ENCODE measurements at regions of chr6 and their contacts with region 1.

Region 1: DNA sequence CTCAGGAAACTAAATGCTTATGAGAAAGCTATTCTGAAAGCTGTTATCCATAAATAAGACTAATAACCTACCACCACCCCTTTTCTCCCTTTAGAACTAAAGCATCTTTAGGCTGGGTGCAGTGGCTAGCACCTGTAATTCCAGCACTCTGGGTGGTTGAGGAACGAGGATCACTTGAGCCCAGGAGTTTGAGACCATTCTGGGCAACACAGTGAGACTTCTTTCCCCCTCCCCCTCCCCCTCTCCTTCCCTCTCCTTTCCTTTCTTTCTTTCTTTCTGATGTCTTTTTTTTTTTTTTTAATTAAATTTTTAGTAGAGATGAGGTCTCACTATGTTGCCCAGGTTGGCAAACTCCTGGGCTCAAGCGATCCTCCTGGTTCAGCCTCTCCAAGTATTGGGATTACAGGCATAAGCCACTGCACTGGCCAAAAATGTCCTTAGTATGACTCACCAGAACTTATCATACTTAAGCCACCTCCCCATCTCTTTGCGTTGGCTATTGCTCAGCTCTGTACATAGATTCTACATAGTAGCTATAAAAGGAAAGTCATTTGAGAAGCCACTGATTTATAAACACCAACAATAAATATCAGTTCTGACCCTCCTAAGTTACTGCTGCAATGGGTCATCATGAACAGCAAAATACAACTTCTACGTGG is 54.8 kb upstream of the SPDEF start:
- DNase-seq: no peak
- H3K4me3 ChIP-seq: no peak overlapping the region
- H3K27ac ChIP-seq: peak overlapping the region; percentile 4 to 54
- H3K4me1 ChIP-seq: peaks cover 0 to 4% of the 10 kb centered on the region in 2 donors
- H3K27me3 ChIP-seq: no peaks in the 10 kb centered on the region
- CTCF ChIP-seq: no peak

Region 2: DNA sequence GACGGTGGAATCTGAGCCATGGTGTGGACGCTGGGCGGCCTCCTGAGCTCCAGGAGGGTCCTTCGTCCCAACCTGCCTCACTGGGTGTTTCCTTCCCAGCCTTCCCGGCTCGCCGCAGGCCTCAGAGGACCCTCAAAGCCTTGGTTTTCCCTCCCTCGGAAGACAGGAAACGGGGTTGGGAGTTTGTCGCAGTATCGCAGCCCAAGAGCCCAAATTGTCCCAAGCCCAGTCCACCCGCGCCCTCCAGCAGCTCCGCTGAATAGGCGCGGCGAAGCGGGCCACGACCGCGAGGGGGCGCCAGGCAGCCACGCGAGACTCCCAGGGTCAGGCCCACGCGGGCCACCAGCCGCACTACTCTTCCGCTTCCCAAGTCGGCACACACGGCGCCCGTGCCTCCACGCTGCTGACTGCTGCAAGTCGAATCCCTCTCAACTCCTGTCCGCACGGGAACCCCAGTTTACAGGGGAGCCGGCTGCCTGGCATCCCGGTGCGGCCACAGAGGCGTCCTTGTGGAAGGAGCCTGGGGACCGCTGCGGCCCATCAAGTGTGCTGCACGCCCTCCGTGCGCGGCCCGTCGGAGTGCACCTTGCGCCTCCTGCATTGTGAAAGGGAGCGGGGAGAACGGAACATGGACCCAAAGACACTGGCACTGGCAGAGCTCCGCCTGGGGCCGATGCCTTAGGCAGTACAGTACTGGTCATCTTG is 414.7 kb before region 1 on chr6:
- intact Hi-C with region 1: loop called (anchors 1 kb)
- DNase-seq: peak; percentile 53 to 92
- H3K4me3 ChIP-seq: peak overlapping the region; percentile 57 to 71
- H3K27ac ChIP-seq: no peak overlapping the region
- H3K4me1 ChIP-seq: peaks cover 0 to 6% of the 10 kb centered on the region in 2 donors
- H3K27me3 ChIP-seq: no peaks in the 10 kb centered on the region
- CTCF ChIP-seq: peak; percentile 98

Region 3: GRCh38 chr6:34414999-34415858 is 195.7 kb before region 1 on chr6:
- intact Hi-C with region 1: loop called (anchors 1 kb)
- DNase-seq: peak in 1 of 2 donors; percentile 87
- H3K4me3 ChIP-seq: peak overlapping the region in 1 of 2 donors; percentile 39
- H3K27ac ChIP-seq: peak overlapping the region; percentile 76 to 81
- H3K4me1 ChIP-seq: peaks cover 4 to 8% of the 10 kb centered on the region in 2 donors
- H3K27me3 ChIP-seq: no peaks in the 10 kb centered on the region
- CTCF ChIP-seq: peak; percentile 63 to 82 (median 76)

Region 4: DNA sequence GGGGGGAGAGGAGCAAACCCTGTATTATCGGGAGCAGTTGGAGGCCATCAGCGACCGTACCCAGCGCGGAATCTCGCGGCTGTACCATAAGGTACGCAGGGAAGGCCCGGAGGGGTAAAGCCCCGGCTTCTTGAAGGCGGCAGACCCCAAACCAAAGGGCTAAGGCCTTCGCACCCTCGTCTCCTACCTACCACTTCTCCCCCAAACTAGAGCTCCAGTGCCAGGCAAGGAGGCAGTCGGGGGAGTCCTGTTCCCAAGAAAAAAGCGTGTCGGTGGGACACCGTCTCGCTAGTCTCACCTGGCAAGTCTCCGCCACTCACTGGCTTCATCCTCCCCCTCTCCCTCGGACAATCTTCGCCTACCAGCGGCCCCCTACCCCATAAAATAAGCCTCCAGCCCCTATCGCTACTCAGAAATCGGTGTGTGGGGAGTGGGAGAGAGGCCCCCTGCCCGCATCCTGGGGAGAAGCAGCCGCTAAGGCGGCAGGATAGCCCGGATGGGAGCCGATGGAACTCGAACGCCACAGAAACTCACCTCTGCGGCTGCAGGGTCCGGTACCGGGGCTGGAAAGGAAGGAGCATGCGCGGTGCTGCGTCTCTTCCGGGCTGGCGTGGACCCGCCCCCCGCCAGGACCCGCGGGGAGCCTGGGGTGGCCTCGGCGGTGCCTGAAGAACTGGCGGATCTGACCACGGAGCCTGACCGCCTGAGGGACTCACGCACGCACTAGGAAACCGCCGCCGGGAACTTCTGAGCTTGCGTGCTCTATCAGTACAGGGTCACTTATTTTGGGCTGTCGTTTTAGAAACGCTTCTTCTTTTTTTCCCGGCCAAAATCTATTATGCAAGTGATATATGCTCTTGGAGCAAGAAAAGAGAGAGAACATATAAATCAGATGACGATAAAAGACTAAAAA is 185.2 kb before region 1 on chr6 and contains the start of gene RPS10:
- intact Hi-C with region 1: loop called (anchors 2 kb)
- DNase-seq: peak; percentile 41 to 94
- H3K4me3 ChIP-seq: peak within 1 kb of the TSS; percentile 70 to 88
- H3K27ac ChIP-seq: peak within 1 kb of the TSS; percentile 83 to 85
- H3K4me1 ChIP-seq: peaks cover 0 to 9% of the 10 kb centered on the region in 2 donors
- H3K27me3 ChIP-seq: no peaks in the 10 kb centered on the region
- CTCF ChIP-seq: no peak
- total RNA-seq, gene RPS10: 1,703 TPM

Region 5: GRCh38 chr6:34526992-34527728 is 83.8 kb before region 1 on chr6:
- intact Hi-C with region 1: loop called (anchors 1 kb)
- DNase-seq: peak; percentile 57 to 96
- H3K4me3 ChIP-seq: peak overlapping the region; percentile 37 to 40
- H3K27ac ChIP-seq: peak overlapping the region; percentile 41 to 52
- H3K4me1 ChIP-seq: peaks cover 0 to 8% of the 10 kb centered on the region in 2 donors
- H3K27me3 ChIP-seq: no peaks in the 10 kb centered on the region
- CTCF ChIP-seq: peak; percentile 66 to 85 (median 75)

Region 6: DNA sequence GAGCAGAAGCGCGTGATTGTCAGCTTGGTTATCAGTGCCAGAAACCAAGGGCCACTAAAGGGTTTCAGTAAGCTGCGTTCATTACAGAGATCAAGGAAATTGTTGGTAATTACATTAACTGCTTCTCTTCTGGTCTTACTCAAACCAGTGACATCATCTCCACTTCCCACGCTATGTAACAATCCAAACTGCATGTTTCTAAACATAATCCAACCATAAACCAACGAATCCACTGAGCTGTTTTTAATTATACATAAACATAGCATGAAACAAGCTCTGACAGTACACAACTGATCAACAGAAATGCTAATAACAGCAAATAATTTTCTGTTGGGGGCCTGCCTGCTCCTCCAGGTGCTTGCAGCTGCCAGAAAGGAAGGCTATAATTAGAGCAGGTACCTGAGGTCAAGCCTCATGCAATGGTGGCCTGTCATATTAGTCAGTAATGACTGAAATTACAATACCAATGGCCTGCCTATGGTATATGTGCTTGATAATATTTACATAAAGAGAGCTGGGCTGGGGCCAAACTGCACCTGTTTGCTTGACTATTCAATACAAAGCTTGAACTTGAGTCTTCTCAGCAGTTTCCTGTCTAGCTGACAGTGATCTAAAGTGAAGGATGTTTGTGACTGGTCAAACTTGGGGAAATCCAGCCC is 45.6 kb after region 1 on chr6:
- intact Hi-C with region 1: loop called (anchors 5 kb)
- DNase-seq: no peak
- H3K4me3 ChIP-seq: peak overlapping the region; percentile 47 to 59
- H3K27ac ChIP-seq: peak overlapping the region; percentile 81 to 87
- H3K4me1 ChIP-seq: peaks cover 7 to 36% of the 10 kb centered on the region in 2 donors
- H3K27me3 ChIP-seq: no peaks in the 10 kb centered on the region
- CTCF ChIP-seq: no peak

Region 7: DNA sequence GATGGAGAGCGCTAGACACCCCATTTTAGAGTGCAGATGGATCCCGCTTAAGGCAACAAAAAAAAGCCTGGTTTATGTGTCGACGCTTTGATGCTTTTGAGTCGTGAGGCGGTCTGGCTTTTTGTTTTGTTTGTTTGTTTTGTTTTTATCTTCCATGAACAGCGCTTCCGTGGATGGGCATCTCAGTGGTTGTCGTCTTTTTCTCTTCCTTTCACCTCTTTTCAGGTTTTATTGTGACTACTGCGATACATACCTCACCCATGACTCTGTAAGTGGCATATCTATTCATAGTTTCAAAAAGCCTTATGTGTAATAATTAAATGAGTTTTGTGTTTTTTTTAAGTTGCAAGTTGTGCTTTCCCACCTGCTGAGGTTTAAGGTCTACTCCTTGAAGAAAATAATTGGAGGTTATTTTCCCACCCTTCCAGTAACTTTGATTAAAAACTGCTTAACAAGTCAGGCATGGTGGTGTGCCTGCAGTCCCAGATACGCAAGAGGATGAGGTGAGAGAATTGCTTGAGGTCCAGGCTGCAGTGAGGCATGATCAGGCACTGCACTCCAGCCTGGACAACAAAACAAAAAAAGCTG is 146.8 kb after region 1 on chr6:
- intact Hi-C with region 1: loop called (anchors 5 kb)
- DNase-seq: no peak
- H3K4me3 ChIP-seq: peak overlapping the region; percentile 84 to 87
- H3K27ac ChIP-seq: peak overlapping the region; percentile 88 to 92
- H3K4me1 ChIP-seq: peaks cover 3 to 7% of the 10 kb centered on the region in 2 donors
- H3K27me3 ChIP-seq: no peaks in the 10 kb centered on the region
- CTCF ChIP-seq: no peak